ENCODE measurements at regions of chr19 and their contacts with region 1.

Region 1: GRCh38 chr19:18588611-18589379 is at the start of gene REX1BD:
- DNase-seq: peak; percentile 86 to 94 (median 89)
- ATAC-seq: peak; percentile 85
- H3K4me3 ChIP-seq: peak within 1 kb of the TSS; percentile 71
- H3K27ac ChIP-seq: peak within 1 kb of the TSS; percentile 79
- H3K4me1 ChIP-seq: peaks cover 20 to 60% of the 10 kb centered on the region in 2 experiments
- H3K27me3 ChIP-seq: no peaks in the 10 kb centered on the region
- CTCF ChIP-seq: peak; percentile 76 to 92 (median 88)
- EP300 ChIP-seq: peak; percentile 51
- POLR2A ChIP-seq: peak; percentile 91
- RAD21 ChIP-seq: peak; percentile 28 to 30; a peak in 3 of 4 replicates
- polyA plus RNA-seq, gene REX1BD: 1.9 to 4.7 TPM

Region 2: DNA sequence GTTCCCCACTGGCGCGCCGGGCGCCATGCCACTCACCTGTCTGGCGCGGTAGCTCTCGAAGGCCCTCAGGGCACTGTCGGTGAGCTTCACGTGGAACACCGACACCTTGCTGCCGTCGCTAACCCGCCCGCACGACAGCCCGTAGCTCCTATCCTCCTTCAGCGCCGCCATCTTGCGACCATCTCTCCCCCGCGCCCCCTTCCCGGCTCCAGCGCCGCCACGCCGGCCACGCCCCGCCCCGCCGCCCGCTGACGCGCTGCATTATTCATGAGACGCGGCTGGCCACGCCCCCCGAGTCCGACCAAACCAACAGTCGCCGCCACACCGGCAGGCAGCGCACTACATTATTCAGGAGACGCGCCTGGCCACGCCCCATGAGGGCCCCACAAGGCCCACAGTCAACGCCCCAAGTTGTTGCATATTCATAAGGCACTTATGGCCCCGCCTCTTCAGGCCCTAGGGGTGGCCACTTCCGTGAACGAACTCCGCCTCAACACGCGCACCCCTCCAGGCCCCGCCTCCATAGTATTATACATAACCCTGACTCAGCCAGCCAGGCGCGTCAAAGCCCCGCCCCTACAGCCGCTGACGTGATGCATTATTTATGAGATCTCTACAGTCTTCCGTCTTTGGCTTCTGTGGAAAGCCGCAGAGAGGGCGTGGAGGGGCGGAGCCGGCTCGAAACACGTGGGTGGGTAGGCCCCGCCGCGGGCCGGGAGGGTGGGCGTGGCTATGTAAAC is 66.7 kb before region 1 on chr19 and contains the start of gene ELL:
- CTCF ChIA-PET with region 1: no interaction called
- POLR2A ChIA-PET with region 1: interaction called, 4 read pairs
- in situ Hi-C with region 1: no loop called
- intact Hi-C with region 1: loop called (anchors 2 kb)
- DNase-seq: peak; percentile 95 to 100 (median 96)
- ATAC-seq: peak; percentile 93
- H3K4me3 ChIP-seq: peak within 1 kb of the TSS; percentile 95
- H3K27ac ChIP-seq: peak within 1 kb of the TSS; percentile 97
- H3K4me1 ChIP-seq: peaks cover 11 to 34% of the 10 kb centered on the region in 2 experiments
- H3K27me3 ChIP-seq: no peaks in the 10 kb centered on the region
- CTCF ChIP-seq: peak in 1 of 3 experiments; percentile 22; a peak in 1 of 6 replicates
- EP300 ChIP-seq: no peak
- POLR2A ChIP-seq: peak; percentile 92
- RAD21 ChIP-seq: no peak
- polyA plus RNA-seq, gene ELL: 0.24 to 0.45 TPM

Region 3: GRCh38 chr19:18571564-18572300 is 17.1 kb before region 1 on chr19 and contains the start of gene UBA52:
- CTCF ChIA-PET with region 1: no interaction called
- POLR2A ChIA-PET with region 1: interaction called, 39 read pairs
- in situ Hi-C with region 1: no loop called
- intact Hi-C with region 1: loop called (anchors 2 kb)
- DNase-seq: peak; percentile 90 to 99 (median 92)
- ATAC-seq: peak; percentile 98
- H3K4me3 ChIP-seq: peak within 1 kb of the TSS; percentile 99
- H3K27ac ChIP-seq: peak within 1 kb of the TSS; percentile 90
- H3K4me1 ChIP-seq: peaks cover 12 to 42% of the 10 kb centered on the region in 2 experiments; a peak in 4 of 5 replicates
- H3K27me3 ChIP-seq: no peaks in the 10 kb centered on the region; a peak in 1 of 5 replicates
- CTCF ChIP-seq: peak in 2 of 3 experiments; percentile 1 to 4; a peak in 1 of 6 replicates
- EP300 ChIP-seq: peak; percentile 48; the same call in 1 of the 2 replicates
- POLR2A ChIP-seq: peak; percentile 98
- RAD21 ChIP-seq: no peak
- polyA plus RNA-seq, gene UBA52: 2,213 to 2,563 TPM

Region 4: GRCh38 chr19:18675779-18676178 is 87.0 kb after region 1 on chr19:
- CTCF ChIA-PET with region 1: interaction called, 4 read pairs
- POLR2A ChIA-PET with region 1: no interaction called
- in situ Hi-C with region 1: no loop called
- intact Hi-C with region 1: loop called (anchors 5 kb)
- DNase-seq: peak; percentile 44 to 57 (median 56)
- ATAC-seq: peak; percentile 63
- H3K4me3 ChIP-seq: no peak overlapping the region
- H3K27ac ChIP-seq: no peak overlapping the region
- H3K4me1 ChIP-seq: peaks cover 7 to 21% of the 10 kb centered on the region in 2 experiments; a peak in 3 of 5 replicates
- H3K27me3 ChIP-seq: no peaks in the 10 kb centered on the region
- CTCF ChIP-seq: peak; percentile 69 to 73 (median 70)
- EP300 ChIP-seq: no peak
- POLR2A ChIP-seq: no peak
- RAD21 ChIP-seq: peak; percentile 54 to 75

Measured in K562 (cell line).